ENCODE measurements at regions of chr17 and their contacts with region 1.

Region 1: DNA sequence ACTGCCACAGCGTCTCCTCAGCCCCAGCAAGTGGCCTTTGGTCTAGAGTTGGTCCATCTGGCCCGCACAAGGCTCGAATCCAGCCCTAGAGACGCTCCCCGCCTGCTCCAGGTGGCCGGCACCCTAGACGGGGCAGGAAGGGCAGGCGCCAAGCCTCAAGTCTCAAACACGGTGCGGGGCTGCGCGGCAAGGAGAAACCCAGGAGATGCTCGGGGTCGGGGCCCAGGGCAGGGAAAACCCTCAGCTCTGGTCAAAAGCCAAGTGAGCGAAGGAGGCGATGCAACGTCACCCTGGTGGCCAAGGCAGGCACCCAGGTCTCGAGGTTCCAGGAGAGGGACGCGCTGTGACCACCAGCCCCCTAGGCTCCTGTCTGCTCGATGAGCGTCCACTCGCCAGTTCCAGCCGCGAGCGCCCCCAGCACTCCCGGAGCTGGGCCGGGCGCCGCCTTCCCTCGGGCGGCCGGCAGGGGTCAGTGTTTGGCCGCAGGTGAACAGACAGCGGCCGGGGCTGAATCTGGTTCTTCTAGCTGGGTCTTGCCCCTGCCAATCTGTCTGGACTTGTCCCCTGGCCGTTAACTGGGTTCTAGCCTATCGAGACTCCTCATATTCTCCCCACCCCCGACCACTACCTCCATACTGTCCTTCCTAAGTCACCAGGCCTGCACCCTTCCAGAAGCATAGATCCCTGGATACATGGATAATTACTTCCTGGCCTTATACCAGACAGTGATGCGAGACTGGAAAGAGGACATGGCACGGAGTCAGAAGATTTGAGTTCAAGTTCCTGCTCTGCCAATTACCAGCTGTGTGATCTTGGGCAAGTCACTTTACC is 44.0 kb downstream of the PRAC1 start:
- DNase-seq: peak; percentile 41 to 64
- H3K4me3 ChIP-seq: no peak overlapping the region; the same call in 1 of the 2 replicates
- H3K27ac ChIP-seq: no peak overlapping the region
- H3K4me1 ChIP-seq: 0 out of 2 replicates have a peak, but pooled peaks cover 4% of the 10 kb centered on the region
- H3K27me3 ChIP-seq: peaks cover 36% of the 10 kb centered on the region
- CTCF ChIP-seq: peak; percentile 97

Region 2: DNA sequence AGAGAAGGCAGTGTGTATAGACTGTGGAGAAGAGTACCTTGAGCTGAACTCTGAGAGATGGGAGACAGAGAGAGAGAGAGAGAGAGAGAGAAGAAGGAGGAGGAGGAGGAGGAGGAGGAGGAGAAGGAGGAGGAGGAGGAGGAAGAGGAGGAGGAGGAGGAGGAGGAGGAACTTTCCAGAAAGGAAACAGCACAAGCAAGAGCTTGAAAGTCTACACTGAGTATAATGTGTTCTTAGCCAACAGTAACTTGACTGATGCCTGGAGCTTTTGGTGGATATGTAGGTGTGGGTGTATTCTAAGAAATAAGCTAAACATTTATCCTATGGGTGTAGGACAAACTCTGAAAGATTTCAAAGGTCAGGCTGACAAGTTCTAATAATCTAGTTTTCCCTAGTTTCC is 454.4 kb before region 1 on chr17:
- CTCF ChIA-PET with region 1: interaction called, 20 read pairs
- POLR2A ChIA-PET with region 1: no interaction called
- intact Hi-C with region 1: no loop called
- DNase-seq: no peak
- H3K4me3 ChIP-seq: no peak overlapping the region
- H3K27ac ChIP-seq: no peak overlapping the region
- H3K4me1 ChIP-seq: 0 out of 2 replicates have a peak, but pooled peaks cover 3% of the 10 kb centered on the region
- H3K27me3 ChIP-seq: no peaks in the 10 kb centered on the region
- CTCF ChIP-seq: no peak

Region 3: DNA sequence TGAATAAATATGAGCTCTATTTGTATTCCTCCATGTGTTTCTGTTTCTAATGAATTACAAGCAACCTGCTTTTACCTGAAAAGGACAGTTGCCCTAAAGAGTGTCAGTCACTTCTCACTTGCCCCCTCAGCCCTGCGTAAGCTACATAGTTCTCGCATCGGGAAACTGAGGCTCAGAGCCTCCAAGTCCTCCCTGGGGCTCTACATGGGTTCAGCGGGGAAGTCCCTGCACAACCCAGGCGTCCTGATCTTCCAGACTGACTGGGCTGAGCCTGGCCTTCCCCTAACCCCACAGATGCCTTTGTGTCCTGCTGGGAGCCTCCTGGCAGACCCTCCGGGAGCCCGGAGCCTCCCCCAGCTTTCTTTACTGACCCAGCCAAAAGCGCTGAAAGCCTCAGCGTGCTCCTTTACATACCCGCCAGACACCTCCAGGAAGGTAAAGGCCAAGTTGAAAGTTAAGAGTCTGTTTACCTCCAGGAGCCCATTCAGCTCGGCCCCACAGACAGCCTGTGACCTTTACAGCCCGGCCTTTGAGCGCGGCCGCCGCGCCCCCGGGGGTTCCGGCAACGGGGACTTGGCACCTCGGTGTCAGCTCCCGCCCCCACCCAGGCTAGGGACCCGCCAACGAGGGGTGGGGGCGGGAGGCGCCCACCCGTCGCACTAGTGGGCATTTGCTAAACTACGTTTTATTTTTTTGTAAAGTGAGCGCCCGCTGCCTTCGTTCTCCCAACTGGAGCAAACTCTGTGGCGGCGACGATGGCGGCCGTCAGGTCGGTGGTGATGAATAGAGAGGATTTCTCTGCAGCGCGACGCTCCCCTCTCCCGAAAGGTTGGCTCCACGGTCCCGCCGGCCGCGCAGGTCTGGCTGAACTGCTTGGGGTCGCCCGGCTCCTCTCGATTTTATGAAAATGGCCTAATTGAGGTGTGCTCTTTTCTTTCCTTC is 54.6 kb after region 1 on chr17:
- CTCF ChIA-PET with region 1: no interaction called
- POLR2A ChIA-PET with region 1: no interaction called
- intact Hi-C with region 1: no loop called
- DNase-seq: no peak
- H3K4me3 ChIP-seq: no peak overlapping the region
- H3K27ac ChIP-seq: no peak overlapping the region
- H3K4me1 ChIP-seq: no peaks in the 10 kb centered on the region
- H3K27me3 ChIP-seq: peaks cover 98% of the 10 kb centered on the region
- CTCF ChIP-seq: no peak

Region 4: GRCh38 chr17:48892940-48893645 is 214.7 kb after region 1 on chr17:
- CTCF ChIA-PET with region 1: no interaction called
- POLR2A ChIA-PET with region 1: no interaction called
- intact Hi-C with region 1: no loop called
- DNase-seq: no peak
- H3K4me3 ChIP-seq: peak overlapping the region; percentile 72
- H3K27ac ChIP-seq: peak overlapping the region; percentile 42
- H3K4me1 ChIP-seq: peaks cover 9% of the 10 kb centered on the region
- H3K27me3 ChIP-seq: no peaks in the 10 kb centered on the region
- CTCF ChIP-seq: no peak